ENCODE measurements at regions of chr3 and their contacts with region 1.

Region 1: GRCh38 chr3:143207338-143207961 is 87.9 kb downstream of the CHST2 start:
- DNase-seq: no peak
- H3K4me3 Mint-ChIP-seq: no peak overlapping the region
- H3K27ac Mint-ChIP-seq: peak overlapping the region; percentile 61
- H3K4me1 Mint-ChIP-seq: peaks cover 33% of the 10 kb centered on the region
- H3K27me3 Mint-ChIP-seq: no peaks in the 10 kb centered on the region

Region 2: DNA sequence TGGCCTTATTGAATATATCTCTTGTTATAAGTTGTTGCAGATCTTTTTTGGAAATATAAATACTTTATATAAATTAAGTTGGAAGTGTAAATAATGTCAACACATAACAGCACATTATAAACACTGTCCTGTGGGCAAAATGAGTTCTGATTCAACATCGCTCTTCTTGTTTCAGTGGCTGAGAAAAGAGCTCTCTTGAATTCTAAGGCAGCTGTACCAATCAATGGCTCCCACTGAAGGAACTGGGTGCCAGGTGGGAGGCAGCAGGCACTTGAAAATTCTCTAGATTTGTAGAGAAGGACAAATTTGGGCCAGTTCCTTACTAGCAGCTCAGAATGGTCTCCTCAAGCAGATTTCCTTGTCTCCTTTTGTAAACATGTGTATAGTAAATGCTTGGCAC is 42.2 kb before region 1 on chr3:
- intact Hi-C with region 1: loop called (anchors 1 kb)
- DNase-seq: no peak
- H3K4me3 Mint-ChIP-seq: peak overlapping the region; percentile 59
- H3K27ac Mint-ChIP-seq: peak overlapping the region; percentile 90
- H3K4me1 Mint-ChIP-seq: peaks cover 70% of the 10 kb centered on the region
- H3K27me3 Mint-ChIP-seq: no peaks in the 10 kb centered on the region

Region 3: GRCh38 chr3:143192193-143192592 is 15.3 kb before region 1 on chr3:
- intact Hi-C with region 1: loop called (anchors 2 kb)
- DNase-seq: no peak
- H3K4me3 Mint-ChIP-seq: no peak overlapping the region
- H3K27ac Mint-ChIP-seq: no peak overlapping the region
- H3K4me1 Mint-ChIP-seq: peaks cover 14% of the 10 kb centered on the region
- H3K27me3 Mint-ChIP-seq: no peaks in the 10 kb centered on the region